ENCODE measurements at regions of chr2 and their contacts with region 1.

Region 1: GRCh38 chr2:68467077-68467960 is at the starts of genes APLF and FBXO48:
- DNase-seq: peak; percentile 100
- H3K4me3 Mint-ChIP-seq: peak within 1 kb of the TSS; percentile 95
- H3K27ac Mint-ChIP-seq: peak within 1 kb of the TSS; percentile 98
- H3K4me1 Mint-ChIP-seq: peaks cover 30% of the 10 kb centered on the region
- H3K27me3 Mint-ChIP-seq: no peaks in the 10 kb centered on the region
- CTCF ChIP-seq: no peak
- total RNA-seq, gene APLF: 4.0 TPM in 2 replicates
- total RNA-seq, gene FBXO48: 1.7 and 2.1 TPM in 2 replicates

Region 2: GRCh38 chr2:68379184-68379708 is 88.1 kb before region 1 on chr2:
- CTCF ChIA-PET with region 1: no interaction called
- POLR2A ChIA-PET with region 1: no interaction called
- intact Hi-C with region 1: no loop called
- DNase-seq: no peak
- H3K4me3 Mint-ChIP-seq: no peak overlapping the region
- H3K27ac Mint-ChIP-seq: no peak overlapping the region
- H3K4me1 Mint-ChIP-seq: no peaks in the 10 kb centered on the region
- H3K27me3 Mint-ChIP-seq: peaks cover 49% of the 10 kb centered on the region
- CTCF ChIP-seq: no peak

Region 3: GRCh38 chr2:68452168-68452900 is 15.0 kb before region 1 on chr2:
- CTCF ChIA-PET with region 1: interaction called, 12 read pairs
- POLR2A ChIA-PET with region 1: interaction called, 11 read pairs
- intact Hi-C with region 1: no loop called
- DNase-seq: no peak
- H3K4me3 Mint-ChIP-seq: no peak overlapping the region
- H3K27ac Mint-ChIP-seq: no peak overlapping the region
- H3K4me1 Mint-ChIP-seq: no peaks in the 10 kb centered on the region
- H3K27me3 Mint-ChIP-seq: no peaks in the 10 kb centered on the region
- CTCF ChIP-seq: no peak

Region 4: GRCh38 chr2:68646302-68646701 is 179.0 kb after region 1 on chr2:
- CTCF ChIA-PET with region 1: interaction called, 5 read pairs
- POLR2A ChIA-PET with region 1: interaction called, 4 read pairs
- intact Hi-C with region 1: loop called (anchors 5 kb)
- DNase-seq: peak; percentile 22
- H3K4me3 Mint-ChIP-seq: no peak overlapping the region
- H3K27ac Mint-ChIP-seq: no peak overlapping the region
- H3K4me1 Mint-ChIP-seq: no peaks in the 10 kb centered on the region
- H3K27me3 Mint-ChIP-seq: peaks cover 68% of the 10 kb centered on the region
- CTCF ChIP-seq: peak; percentile 15

Region 5: DNA sequence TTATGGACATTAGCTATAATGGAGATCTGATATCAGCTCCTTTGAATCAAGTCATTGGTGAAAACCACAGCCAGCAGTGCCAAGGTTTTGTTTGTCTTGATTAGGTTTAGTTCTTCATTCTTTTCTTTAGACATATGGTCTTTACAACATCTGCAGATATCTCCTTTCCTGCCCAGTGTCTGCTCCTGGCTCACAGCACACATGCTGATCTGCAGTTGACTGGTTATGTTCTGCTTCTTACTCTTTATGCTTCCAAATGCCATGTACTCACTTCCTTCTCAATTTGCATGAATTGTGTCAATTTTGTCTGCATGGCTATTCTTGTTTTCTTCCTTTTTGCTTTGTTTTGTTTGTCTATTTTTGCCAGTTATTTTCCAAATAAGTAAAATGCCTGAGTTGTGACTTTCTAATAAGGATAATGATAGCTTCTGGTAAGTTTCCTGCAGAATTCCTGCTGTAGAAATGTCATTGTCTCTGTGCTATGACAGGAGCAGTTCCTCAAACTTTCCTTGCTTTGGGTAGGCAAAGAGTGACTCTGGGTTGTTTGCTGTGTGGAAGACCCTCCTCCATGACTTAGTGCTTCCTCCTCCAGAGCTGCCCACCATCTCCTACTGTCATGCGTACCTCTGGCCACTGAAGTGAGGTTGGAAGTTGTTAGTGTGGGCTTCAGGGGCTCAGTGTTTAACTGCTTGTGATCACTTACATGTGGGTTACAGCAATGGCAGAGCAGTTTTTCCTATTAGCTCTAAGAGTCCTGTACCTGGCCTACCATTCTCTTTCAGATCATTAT is 275.5 kb after region 1 on chr2:
- CTCF ChIA-PET with region 1: interaction called, 13 read pairs
- POLR2A ChIA-PET with region 1: no interaction called
- intact Hi-C with region 1: no loop called
- DNase-seq: no peak
- H3K4me3 Mint-ChIP-seq: no peak overlapping the region
- H3K27ac Mint-ChIP-seq: no peak overlapping the region
- H3K4me1 Mint-ChIP-seq: peaks cover 23% of the 10 kb centered on the region
- H3K27me3 Mint-ChIP-seq: no peaks in the 10 kb centered on the region
- CTCF ChIP-seq: no peak

Region 6: DNA sequence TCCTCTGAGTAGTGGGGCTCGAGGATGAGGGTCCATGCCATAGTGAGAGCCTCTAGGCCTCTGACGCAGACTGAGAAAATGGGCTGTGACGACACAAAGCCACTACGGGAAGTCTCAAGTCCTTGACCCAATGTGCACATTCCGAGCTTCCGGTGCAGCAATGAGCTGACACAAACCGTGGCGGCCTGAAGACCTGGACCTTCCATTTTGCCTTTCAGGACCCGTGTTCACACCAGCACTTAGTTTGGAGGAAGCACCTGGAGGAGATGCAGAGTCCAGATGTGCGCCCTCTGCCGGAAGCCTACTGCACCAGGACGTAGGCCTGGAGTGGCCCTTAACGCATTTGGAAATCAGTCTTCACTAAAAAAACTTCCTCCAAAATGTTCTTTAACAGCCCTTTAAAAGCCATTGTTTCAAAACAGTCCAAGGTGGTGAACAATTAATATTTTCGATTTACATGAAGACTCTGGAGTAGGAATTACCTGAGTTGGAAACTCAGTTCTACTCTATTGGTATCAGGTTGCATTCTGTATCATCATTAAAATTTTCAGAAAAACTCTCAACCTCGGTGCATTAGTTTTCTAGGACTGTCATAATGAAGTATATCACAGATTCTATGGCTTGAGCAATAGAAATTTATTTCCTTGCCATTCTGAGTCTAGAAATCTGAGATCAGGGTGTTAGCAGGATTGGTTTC is 370.0 kb after region 1 on chr2:
- CTCF ChIA-PET with region 1: no interaction called
- POLR2A ChIA-PET with region 1: no interaction called
- intact Hi-C with region 1: loop called (anchors 5 kb)
- DNase-seq: peak; percentile 84
- H3K4me3 Mint-ChIP-seq: no peak overlapping the region
- H3K27ac Mint-ChIP-seq: no peak overlapping the region
- H3K4me1 Mint-ChIP-seq: peaks cover 4% of the 10 kb centered on the region
- H3K27me3 Mint-ChIP-seq: no peaks in the 10 kb centered on the region
- CTCF ChIP-seq: peak; percentile 68

Region 7: GRCh38 chr2:68925295-68925896 is 458.1 kb after region 1 on chr2:
- CTCF ChIA-PET with region 1: interaction called, 43 read pairs
- POLR2A ChIA-PET with region 1: interaction called, 3 read pairs
- intact Hi-C with region 1: loop called (anchors 1 kb)
- DNase-seq: peak; percentile 73
- H3K4me3 Mint-ChIP-seq: no peak overlapping the region
- H3K27ac Mint-ChIP-seq: no peak overlapping the region
- H3K4me1 Mint-ChIP-seq: peaks cover 5% of the 10 kb centered on the region
- H3K27me3 Mint-ChIP-seq: no peaks in the 10 kb centered on the region
- CTCF ChIP-seq: peak; percentile 93